ENCODE measurements at regions of chr2 and their contacts with region 1.

Region 1: DNA sequence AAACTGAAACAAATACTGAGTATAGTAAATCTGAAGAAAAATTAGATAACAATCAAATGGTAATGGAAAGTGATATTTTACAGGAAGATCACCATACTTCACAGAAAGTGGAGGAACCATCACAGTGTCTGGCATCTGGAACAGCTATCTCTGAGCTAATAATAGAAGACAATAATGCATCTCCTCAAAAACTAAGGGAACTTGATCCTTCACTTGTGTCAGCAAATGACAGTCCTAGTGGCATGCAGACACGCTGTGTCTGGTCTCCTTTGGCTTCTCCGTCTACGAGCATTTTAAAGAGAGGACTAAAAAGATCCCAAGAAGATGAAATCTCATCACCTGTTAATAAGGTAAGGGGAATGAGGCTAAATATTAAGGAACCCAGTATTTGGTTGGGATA is 56.1 kb downstream of the RIF1 start:
- DNase-seq: no peak
- H3K4me3 Mint-ChIP-seq: no peak overlapping the region
- H3K27ac Mint-ChIP-seq: no peak overlapping the region
- H3K4me1 Mint-ChIP-seq: no peaks in the 10 kb centered on the region
- H3K27me3 Mint-ChIP-seq: no peaks in the 10 kb centered on the region

Region 2: DNA sequence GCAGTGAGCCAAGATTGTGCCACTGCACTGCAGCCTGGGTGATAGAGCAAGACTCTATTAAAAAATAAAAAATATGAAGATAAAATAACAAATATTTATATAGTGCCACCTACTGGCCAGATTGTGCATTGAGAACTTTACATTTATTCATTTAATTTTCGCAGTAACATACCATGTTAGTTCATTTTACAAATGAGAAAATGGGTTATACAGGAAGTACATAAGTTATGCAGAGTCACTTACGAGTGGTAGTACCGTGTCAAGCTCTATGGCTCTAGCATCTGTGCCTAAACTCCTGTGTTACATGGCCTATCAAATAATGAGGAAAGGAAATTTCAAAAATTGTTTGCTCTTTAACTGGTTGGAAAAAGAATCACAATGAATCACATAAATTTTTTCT is 28.1 kb before region 1 on chr2:
- intact Hi-C with region 1: loop called (anchors 5 kb)
- DNase-seq: peak; percentile 62
- H3K4me3 Mint-ChIP-seq: no peak overlapping the region
- H3K27ac Mint-ChIP-seq: no peak overlapping the region
- H3K4me1 Mint-ChIP-seq: peaks cover 3% of the 10 kb centered on the region
- H3K27me3 Mint-ChIP-seq: no peaks in the 10 kb centered on the region